ENCODE measurements at regions of chr12 and their contacts with region 1.

Region 1: GRCh38 chr12:27733052-27733656 is 22.5 kb downstream of the MRPS35 start:
- DNase-seq: no peak
- H3K4me3 ChIP-seq: no peak overlapping the region
- H3K27ac ChIP-seq: no peak overlapping the region
- H3K4me1 ChIP-seq: no peaks in the 10 kb centered on the region
- H3K27me3 ChIP-seq: no peaks in the 10 kb centered on the region
- CTCF ChIP-seq: peak in 3 of 4 experiments; percentile 45 to 71 (median 68)
- POLR2A ChIP-seq: no peak

Region 2: GRCh38 chr12:27821259-27821973 is 88.3 kb after region 1 on chr12:
- intact Hi-C with region 1: loop called (anchors 5 kb)
- DNase-seq: peak; percentile 39
- H3K4me3 ChIP-seq: no peak overlapping the region
- H3K27ac ChIP-seq: no peak overlapping the region
- H3K4me1 ChIP-seq: no peaks in the 10 kb centered on the region
- H3K27me3 ChIP-seq: no peaks in the 10 kb centered on the region
- CTCF ChIP-seq: peak; percentile 51 to 67 (median 63)
- POLR2A ChIP-seq: no peak

Region 3: DNA sequence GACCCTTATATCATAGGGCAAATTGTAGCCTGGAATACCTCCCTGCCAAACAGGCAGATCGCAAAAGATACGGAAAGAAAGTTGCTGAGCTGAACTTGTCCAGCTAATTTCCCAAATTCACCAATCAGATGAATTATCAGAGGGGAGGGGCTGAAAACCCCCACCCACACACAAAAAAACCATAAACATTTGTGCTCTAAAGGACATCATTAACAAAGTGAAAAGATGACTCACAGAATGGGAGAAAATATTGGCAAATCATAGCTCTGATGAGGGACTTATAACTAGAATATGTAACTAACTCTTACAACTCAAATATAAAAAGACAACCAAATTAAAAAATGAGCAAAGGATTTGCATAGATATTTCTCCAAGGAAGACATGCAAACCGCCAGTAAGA is 203.0 kb after region 1 on chr12:
- intact Hi-C with region 1: loop called (anchors 5 kb)
- DNase-seq: no peak
- H3K4me3 ChIP-seq: no peak overlapping the region
- H3K27ac ChIP-seq: no peak overlapping the region
- H3K4me1 ChIP-seq: no peaks in the 10 kb centered on the region
- H3K27me3 ChIP-seq: no peaks in the 10 kb centered on the region
- CTCF ChIP-seq: no peak
- POLR2A ChIP-seq: no peak